ENCODE measurements at regions of chr14 and their contacts with region 1.

Region 1: GRCh38 chr14:88168498-88169165 is 154.4 kb downstream of the KCNK10 start:
- DNase-seq: no peak
- ATAC-seq: peak; percentile 32 to 57 (median 44)
- H3K4me3 ChIP-seq: no peak overlapping the region
- H3K27ac ChIP-seq: no peak overlapping the region
- H3K4me1 ChIP-seq: no peaks in the 10 kb centered on the region
- H3K27me3 ChIP-seq: peaks cover 0 to 4% (median 0%) of the 10 kb centered on the region in 3 donors
- CTCF ChIP-seq: peak; percentile 43

Region 2: DNA sequence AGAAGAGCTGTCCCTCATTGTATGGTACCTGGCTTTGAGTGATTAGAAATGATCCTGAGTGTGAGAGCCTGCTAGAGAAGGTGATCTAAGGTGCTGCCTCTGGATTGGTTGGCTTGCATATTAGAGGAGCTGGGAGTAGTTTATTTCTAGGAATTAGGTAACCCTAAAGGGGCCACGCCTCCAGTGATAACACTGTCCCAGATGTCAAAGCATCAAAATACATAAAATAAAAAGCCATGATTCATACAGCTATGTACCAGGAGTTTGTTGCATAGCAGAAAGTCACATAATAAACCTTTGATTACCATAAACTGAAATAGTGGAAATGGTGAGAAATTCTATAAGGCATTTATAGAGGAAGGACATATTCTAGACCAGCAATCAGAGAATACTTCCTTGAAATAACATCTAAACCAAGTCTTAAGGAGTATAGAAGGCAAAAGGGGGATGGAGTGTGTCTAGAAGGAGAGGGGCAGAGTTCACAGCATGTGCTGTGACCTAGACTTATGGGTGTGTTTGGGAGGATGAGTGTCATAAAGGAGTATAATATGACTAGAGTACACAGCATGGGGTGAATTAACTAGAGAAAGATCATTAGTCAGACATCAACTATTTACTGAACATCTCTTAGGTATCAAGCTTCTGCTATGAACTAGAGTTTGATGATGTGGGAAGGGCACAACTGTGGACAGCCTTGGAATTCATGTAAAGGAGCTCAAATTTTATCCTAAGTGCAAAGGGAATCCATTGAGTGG is 862.0 kb before region 1 on chr14:
- intact Hi-C with region 1: no loop called
- DNase-seq: no peak
- ATAC-seq: no peak
- H3K4me3 ChIP-seq: no peak overlapping the region
- H3K27ac ChIP-seq: no peak overlapping the region
- H3K4me1 ChIP-seq: no peaks in the 10 kb centered on the region
- H3K27me3 ChIP-seq: no peaks in the 10 kb centered on the region
- CTCF ChIP-seq: no peak

Region 3: GRCh38 chr14:87944987-87945604 is 223.5 kb before region 1 on chr14:
- intact Hi-C with region 1: loop called in 1 of 2 experiments (anchors 5 kb)
- DNase-seq: no peak
- ATAC-seq: peak in 2 of 4 donors; percentile 43 to 73
- H3K4me3 ChIP-seq: no peak overlapping the region
- H3K27ac ChIP-seq: no peak overlapping the region
- H3K4me1 ChIP-seq: no peaks in the 10 kb centered on the region
- H3K27me3 ChIP-seq: no peaks in the 10 kb centered on the region
- CTCF ChIP-seq: peak; percentile 60

Region 4: GRCh38 chr14:88013750-88014349 is 154.8 kb before region 1 on chr14:
- intact Hi-C with region 1: loop called in 1 of 2 experiments (anchors 5 kb)
- DNase-seq: peak; percentile 38 to 58
- ATAC-seq: peak; percentile 68 to 89 (median 82)
- H3K4me3 ChIP-seq: no peak overlapping the region
- H3K27ac ChIP-seq: no peak overlapping the region
- H3K4me1 ChIP-seq: no peaks in the 10 kb centered on the region
- H3K27me3 ChIP-seq: no peaks in the 10 kb centered on the region
- CTCF ChIP-seq: peak; percentile 76

Measured in psoas muscle (tissue), 8 donors.